Ascending aorta (tissue), 2 donors: ENCODE measurements at regions of chr11 and their contacts with region 1.

Region 1: GRCh38 chr11:62645956-62646824 is at the start of gene GANAB:
- DNase-seq: peak; percentile 97 to 100
- H3K4me3 ChIP-seq: peak within 1 kb of the TSS; percentile 66 to 92
- H3K27ac ChIP-seq: peak within 1 kb of the TSS; percentile 89 to 92
- H3K4me1 ChIP-seq: peaks cover 4 to 14% of the 10 kb centered on the region in 2 donors
- H3K27me3 ChIP-seq: no peaks in the 10 kb centered on the region
- CTCF ChIP-seq: no peak
- total RNA-seq, gene GANAB: 326 TPM

Region 2: DNA sequence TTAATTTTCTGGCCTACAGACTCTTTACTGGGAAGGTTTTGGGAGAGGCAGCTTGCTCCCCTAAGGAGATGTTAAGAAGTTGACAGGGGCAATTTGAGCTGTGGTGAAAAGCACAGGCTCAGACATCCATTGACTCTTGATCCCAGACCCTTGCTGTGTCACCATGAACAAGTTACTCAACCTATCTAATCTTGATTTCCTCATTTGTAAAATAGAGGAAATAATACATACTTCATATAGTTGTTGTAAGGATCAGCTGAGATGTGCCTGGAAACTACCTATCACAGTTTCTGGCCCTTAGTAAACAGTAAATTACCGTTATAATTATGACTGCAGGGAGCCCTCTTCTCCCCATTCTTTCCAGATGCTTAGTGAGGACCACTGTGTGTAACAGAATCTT is 330.8 kb before region 1 on chr11:
- intact Hi-C with region 1: no loop called
- DNase-seq: no peak
- H3K4me3 ChIP-seq: no peak overlapping the region
- H3K27ac ChIP-seq: no peak overlapping the region
- H3K4me1 ChIP-seq: no peaks in the 10 kb centered on the region
- H3K27me3 ChIP-seq: no peaks in the 10 kb centered on the region
- CTCF ChIP-seq: no peak

Region 3: DNA sequence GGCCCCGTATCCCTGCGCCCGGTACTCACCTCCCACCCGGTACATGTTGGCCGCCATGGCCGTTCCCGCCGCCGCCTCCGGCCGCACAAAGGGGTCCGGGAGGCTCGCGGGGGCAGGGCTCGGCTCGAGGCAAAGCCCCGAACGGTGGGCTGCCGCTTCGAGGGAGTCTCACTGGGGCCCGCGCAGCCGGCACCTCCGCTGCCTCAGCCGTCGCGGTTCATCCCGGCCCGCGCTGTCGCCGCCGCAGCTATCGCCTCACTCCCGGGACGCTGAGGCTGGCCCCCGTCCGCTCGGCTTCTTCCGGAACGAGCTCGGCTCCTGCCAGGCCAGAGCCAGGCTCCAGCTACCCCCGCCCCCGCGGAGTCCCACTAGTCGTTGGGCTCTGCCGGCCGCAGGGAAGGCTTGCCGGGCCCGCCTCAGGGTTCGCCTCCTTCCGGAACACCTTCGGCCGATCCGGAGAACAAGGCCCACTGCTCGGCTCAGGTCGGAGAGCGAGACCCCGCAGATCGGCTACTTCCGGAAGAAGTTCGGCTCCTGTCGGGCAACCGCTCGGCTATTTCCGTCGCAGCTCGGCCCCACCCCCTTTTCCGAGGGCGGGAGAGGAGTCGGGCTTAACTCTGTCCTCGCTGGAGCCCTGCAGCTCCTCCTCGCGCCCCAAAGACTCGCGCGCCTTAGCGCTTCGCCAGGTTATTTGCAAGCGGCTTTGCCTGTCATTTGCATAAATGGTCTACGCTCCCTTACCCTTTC is 44.6 kb before region 1 on chr11 and contains the start of gene MTA2:
- intact Hi-C with region 1: loop called (anchors 5 kb)
- DNase-seq: peak; percentile 89 to 98
- H3K4me3 ChIP-seq: peak within 1 kb of the TSS; percentile 87 to 98
- H3K27ac ChIP-seq: peak within 1 kb of the TSS; percentile 96 to 97
- H3K4me1 ChIP-seq: peaks cover 8 to 20% of the 10 kb centered on the region in 2 donors
- H3K27me3 ChIP-seq: no peaks in the 10 kb centered on the region
- CTCF ChIP-seq: no peak
- total RNA-seq, gene MTA2: 79.2 TPM

Region 4: DNA sequence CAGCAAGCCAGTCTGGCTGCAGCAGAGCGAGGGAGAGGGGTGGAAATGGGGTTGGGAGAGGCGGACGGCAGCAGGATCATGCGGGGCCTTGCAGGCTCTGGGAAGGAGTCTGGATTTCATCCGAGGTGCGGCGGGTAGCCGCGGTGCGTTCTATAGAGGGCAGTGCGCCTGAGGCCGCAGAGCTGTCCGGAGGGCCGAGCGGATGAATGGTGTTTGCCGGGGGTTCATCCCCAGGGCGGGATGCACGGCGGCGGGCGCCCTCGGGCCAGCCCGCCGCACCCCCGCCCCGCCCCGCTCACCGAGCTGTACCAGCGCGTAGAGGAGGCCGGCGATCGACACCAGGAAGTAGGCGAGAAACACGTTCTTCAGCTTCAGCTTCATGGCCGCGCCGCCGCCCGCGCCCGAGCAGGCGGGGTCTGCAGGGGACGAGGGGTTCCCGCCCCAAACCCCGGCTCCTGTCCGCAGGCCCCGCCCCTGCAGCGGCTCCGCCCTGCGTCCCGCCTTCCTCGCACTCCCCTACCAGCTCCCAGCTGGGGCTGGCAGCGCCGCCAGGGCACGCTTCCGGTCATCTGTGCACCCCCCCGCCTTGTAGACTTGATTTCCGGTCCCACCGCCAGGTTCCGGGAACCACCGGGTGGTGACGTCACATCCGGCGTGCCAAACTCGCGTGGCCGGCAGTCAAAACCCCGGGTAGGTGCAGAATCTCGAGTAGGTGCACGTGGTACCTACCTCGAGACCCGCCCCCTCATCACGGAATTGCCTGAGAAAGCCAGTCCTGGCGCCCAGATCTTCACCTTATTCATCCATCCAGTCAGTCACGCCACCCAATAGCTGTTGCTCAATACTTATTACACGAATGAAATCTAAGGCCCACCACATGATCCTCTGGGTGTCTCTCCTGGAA is 24.4 kb before region 1 on chr11 and contains the start of gene B3GAT3:
- intact Hi-C with region 1: loop called (anchors 1 kb)
- DNase-seq: peak; percentile 92 to 99
- H3K4me3 ChIP-seq: peak within 1 kb of the TSS; percentile 69 to 93
- H3K27ac ChIP-seq: peak within 1 kb of the TSS; percentile 67 to 92
- H3K4me1 ChIP-seq: peaks cover 4 to 10% of the 10 kb centered on the region in 2 donors
- H3K27me3 ChIP-seq: no peaks in the 10 kb centered on the region
- CTCF ChIP-seq: peak in 1 of 3 experiments; percentile 1
- total RNA-seq, gene B3GAT3: 61.3 TPM